ENCODE measurements at regions of chr13 and their contacts with region 1.

Region 1: DNA sequence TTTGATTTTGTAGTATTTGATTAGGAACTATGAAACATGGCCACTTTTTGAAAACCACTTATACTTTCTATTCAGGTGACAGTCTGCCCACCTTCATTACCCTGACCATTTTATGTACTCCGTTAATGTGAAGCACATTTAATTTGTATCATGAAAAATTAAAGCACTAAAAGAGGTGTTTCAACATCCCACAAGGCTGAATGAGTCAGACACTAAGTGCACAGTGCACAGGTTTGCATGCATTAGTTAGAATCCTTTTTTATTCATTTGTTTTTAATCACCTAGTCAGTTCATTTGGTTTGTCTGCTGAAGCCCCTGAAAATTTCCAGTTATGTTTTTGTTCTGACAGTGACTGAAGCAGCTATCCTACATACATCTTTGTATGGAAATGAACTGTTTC is 271.0 kb downstream of the SLITRK5 start:
- DNase-seq: no peak
- H3K4me3 ChIP-seq: no peak overlapping the region
- CTCF ChIP-seq: no peak
- POLR2A ChIP-seq: no peak

Region 2: DNA sequence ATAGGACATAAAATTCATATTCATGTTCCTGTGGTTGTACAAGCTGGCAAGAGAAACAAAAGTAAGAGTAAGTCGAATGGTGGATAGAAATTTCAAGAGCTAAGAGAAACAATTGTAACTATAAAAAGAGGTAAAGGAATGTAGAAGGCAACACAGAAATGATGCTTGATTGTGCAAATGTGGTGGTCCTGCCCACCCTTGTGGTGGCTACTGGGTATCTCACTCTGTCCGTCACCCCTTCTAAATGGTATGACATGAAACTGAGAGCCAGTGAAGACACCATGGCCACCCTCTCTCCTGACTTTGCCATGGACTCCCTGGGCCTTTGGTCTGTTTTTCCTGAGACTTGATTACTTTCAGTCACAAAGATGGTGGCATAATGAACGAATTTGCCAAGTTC is 1217.1 kb before region 1 on chr13:
- intact Hi-C with region 1: loop called (anchors 5 kb)
- DNase-seq: no peak
- H3K4me3 ChIP-seq: no peak overlapping the region
- CTCF ChIP-seq: no peak
- POLR2A ChIP-seq: no peak

Region 3: GRCh38 chr13:87894059-87894458 is 48.1 kb before region 1 on chr13:
- intact Hi-C with region 1: no loop called
- DNase-seq: no peak
- H3K4me3 ChIP-seq: no peak overlapping the region
- CTCF ChIP-seq: no peak
- POLR2A ChIP-seq: no peak

Region 4: DNA sequence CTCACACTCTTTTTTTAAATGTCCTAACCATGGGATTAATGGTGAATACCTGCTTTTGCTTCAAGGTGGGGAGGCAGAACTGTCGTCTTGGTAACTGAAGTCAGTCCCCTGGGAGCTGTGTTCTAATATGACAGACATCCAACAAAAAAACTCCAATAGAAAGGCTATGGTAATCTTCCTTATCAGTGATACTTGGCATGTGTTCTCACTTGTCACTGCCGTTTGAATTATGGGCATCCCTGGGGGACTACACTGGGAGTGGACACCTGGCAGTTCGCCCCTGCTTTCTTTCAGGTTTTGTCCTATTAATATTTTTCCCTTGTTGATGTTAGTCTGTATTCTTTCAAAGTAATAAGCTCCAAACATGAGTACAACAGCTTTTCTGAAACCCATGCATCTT is 18.5 kb before region 1 on chr13:
- intact Hi-C with region 1: loop called (anchors 1 kb)
- DNase-seq: no peak
- H3K4me3 ChIP-seq: no peak overlapping the region
- CTCF ChIP-seq: no peak
- POLR2A ChIP-seq: no peak

Measured in lower leg skin (tissue), 4 donors.